ENCODE measurements at regions of chr2 and their contacts with region 1.

Region 1: DNA sequence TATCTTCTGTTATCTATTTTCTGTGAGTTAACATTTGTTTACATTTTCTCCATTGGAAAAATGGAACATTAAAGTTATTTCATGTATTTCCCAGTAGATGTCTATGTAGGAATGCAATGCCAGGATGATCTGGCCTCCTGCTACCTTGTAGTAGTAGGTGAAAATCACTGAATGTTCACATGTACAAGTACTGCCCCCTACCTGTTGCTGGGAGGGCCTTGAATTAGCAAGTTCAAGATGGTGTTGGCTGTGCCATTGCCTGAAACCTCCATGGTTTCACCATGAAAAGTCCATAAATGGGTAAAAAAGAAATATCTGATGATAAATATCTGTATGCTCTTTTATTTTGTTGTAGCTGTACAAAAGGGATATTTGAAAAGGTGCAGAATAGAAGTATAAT is 30.7 kb downstream of the XRCC5 start:
- DNase-seq: peak in 7 of 9 donors; percentile 26 to 64 (median 52)
- ATAC-seq: peak; percentile 81
- H3K4me3 ChIP-seq: no peak overlapping the region
- H3K4me3 Mint-ChIP-seq: no peak overlapping the region
- H3K27ac ChIP-seq: no peak overlapping the region
- H3K27ac Mint-ChIP-seq: peak overlapping the region in 3 of 9 donors; percentile 22 to 48 (median 31)
- H3K4me1 ChIP-seq: no peaks in the 10 kb centered on the region
- H3K4me1 Mint-ChIP-seq: peaks cover 7 to 44% (median 37%) of the 10 kb centered on the region in 7 donors
- H3K27me3 ChIP-seq: no peaks in the 10 kb centered on the region
- H3K27me3 Mint-ChIP-seq: no peaks in the 10 kb centered on the region

Region 2: DNA sequence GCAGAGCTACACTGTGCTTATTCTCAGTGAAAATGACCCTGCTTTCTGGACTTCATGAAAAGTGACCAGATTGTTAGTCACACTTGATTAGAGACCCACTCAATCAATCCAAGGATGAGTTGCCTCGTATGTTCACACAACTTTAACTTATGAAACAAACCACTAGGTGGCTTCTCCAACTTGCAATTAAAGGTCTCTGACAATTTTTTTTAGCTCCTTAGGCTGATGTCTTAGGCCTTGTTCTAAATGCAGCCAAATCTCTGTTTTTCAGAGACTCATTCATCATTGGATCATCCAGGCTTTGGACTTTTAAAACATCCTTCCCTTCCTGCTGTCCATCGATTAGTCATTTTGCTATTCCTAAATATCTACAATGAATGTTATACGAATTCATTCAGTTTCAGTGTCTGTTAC is 189.9 kb before region 1 on chr2:
- CTCF ChIA-PET with region 1: no interaction called
- POLR2A ChIA-PET with region 1: no interaction called
- intact Hi-C with region 1: loop called in 1 of 2 experiments (anchors 1 kb)
- DNase-seq: peak in 6 of 9 donors; percentile 4 to 47 (median 26)
- ATAC-seq: peak; percentile 42
- H3K4me3 ChIP-seq: no peak overlapping the region
- H3K4me3 Mint-ChIP-seq: no peak overlapping the region
- H3K27ac ChIP-seq: no peak overlapping the region
- H3K27ac Mint-ChIP-seq: no peak overlapping the region
- H3K4me1 ChIP-seq: no peaks in the 10 kb centered on the region
- H3K4me1 Mint-ChIP-seq: peaks cover 0 to 5% (median 0%) of the 10 kb centered on the region in 7 donors
- H3K27me3 ChIP-seq: no peaks in the 10 kb centered on the region
- H3K27me3 Mint-ChIP-seq: no peaks in the 10 kb centered on the region

Region 3: GRCh38 chr2:216064011-216064630 is 75.8 kb before region 1 on chr2:
- CTCF ChIA-PET with region 1: interaction called, 8 read pairs
- POLR2A ChIA-PET with region 1: interaction called, 4 read pairs
- intact Hi-C with region 1: loop called in 1 of 2 experiments (anchors 1 kb)
- DNase-seq: no peak
- ATAC-seq: no peak
- H3K4me3 ChIP-seq: no peak overlapping the region
- H3K4me3 Mint-ChIP-seq: no peak overlapping the region
- H3K27ac ChIP-seq: no peak overlapping the region
- H3K27ac Mint-ChIP-seq: peak overlapping the region in 1 of 9 donors; percentile 41
- H3K4me1 ChIP-seq: peaks cover 0 to 4% of the 10 kb centered on the region in 2 donors
- H3K4me1 Mint-ChIP-seq: peaks cover 7 to 28% (median 24%) of the 10 kb centered on the region in 7 donors
- H3K27me3 ChIP-seq: no peaks in the 10 kb centered on the region
- H3K27me3 Mint-ChIP-seq: no peaks in the 10 kb centered on the region

Region 4: DNA sequence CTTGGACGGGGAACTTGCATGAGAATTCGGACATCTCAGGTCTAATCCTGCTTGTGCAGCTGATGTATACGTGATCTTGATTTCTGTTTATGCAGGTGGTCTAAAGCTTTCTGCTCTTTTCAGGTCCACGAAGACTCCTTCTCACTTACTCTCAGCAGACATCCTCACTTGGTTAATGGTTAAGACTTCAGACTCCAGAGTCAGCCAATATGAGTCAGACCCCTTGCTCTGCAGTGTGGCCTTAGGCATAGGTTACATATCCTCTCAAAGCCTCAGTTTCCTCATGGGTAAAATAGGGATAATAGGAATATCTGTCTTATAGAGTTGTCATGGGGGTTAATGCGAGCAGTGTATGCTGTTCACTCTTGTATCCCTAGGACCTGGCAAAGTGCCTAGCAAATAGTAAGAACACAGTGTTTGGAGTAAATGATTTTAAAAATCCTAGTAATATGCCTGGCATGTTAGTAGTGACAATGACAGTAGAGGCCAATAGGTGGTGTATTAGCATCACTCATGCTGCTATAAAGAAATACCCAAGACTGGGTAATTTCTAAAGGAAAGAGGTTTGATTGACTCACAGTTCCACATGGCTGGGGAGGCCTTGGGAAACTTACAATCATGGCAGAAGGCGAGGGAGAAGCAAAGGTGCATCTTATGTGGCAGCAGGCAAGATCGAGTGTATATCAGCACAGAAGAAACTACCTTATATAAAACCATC is 11.6 kb after region 1 on chr2:
- CTCF ChIA-PET with region 1: interaction called, 5 read pairs
- POLR2A ChIA-PET with region 1: no interaction called
- intact Hi-C with region 1: loop called in 1 of 2 experiments (anchors 2 kb)
- DNase-seq: no peak
- ATAC-seq: no peak
- H3K4me3 ChIP-seq: no peak overlapping the region
- H3K4me3 Mint-ChIP-seq: no peak overlapping the region
- H3K27ac ChIP-seq: no peak overlapping the region
- H3K27ac Mint-ChIP-seq: peak overlapping the region in 7 of 9 donors; percentile 13 to 73 (median 43)
- H3K4me1 ChIP-seq: no peaks in the 10 kb centered on the region
- H3K4me1 Mint-ChIP-seq: peaks cover 21 to 70% (median 37%) of the 10 kb centered on the region in 7 donors
- H3K27me3 ChIP-seq: no peaks in the 10 kb centered on the region
- H3K27me3 Mint-ChIP-seq: no peaks in the 10 kb centered on the region

Region 5: DNA sequence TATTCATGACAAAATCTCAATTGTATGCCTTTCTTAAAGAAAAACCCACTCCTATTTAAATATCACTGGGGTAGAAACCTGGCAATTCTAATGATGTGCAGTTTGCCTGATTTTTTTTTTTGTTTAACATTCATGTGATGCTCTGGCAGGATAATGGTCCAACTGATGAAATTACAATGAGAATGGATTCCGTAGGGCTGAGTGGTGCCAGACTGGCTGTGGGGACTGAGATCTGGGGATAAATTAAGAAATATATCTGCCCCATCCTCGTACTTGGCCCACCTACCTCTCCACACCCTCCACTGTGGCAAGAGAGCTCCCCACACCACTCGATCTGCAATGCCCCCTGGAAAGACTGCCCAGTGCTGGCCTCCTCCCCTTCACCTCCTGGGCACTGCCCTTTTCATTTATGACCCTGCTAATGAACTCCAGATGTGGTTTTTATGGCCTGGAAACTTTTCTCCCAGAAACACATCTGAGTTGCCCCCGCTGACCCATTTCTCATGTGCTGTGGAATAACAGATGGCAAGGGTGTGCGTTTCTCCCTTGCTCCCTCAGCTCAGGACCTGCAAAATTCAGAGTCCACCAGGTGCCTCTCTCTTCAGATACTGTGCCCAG is 325.8 kb after region 1 on chr2:
- CTCF ChIA-PET with region 1: no interaction called
- POLR2A ChIA-PET with region 1: no interaction called
- intact Hi-C with region 1: no loop called
- DNase-seq: no peak
- ATAC-seq: no peak
- H3K4me3 ChIP-seq: no peak overlapping the region
- H3K4me3 Mint-ChIP-seq: no peak overlapping the region
- H3K27ac ChIP-seq: no peak overlapping the region
- H3K27ac Mint-ChIP-seq: no peak overlapping the region
- H3K4me1 ChIP-seq: no peaks in the 10 kb centered on the region
- H3K4me1 Mint-ChIP-seq: no peaks in the 10 kb centered on the region
- H3K27me3 ChIP-seq: no peaks in the 10 kb centered on the region
- H3K27me3 Mint-ChIP-seq: no peaks in the 10 kb centered on the region

Measured in naive thymus-derived CD4-positive, alpha-beta T cell (primary cell).